ENCODE measurements at regions of chr9 and their contacts with region 1.

Region 1: DNA sequence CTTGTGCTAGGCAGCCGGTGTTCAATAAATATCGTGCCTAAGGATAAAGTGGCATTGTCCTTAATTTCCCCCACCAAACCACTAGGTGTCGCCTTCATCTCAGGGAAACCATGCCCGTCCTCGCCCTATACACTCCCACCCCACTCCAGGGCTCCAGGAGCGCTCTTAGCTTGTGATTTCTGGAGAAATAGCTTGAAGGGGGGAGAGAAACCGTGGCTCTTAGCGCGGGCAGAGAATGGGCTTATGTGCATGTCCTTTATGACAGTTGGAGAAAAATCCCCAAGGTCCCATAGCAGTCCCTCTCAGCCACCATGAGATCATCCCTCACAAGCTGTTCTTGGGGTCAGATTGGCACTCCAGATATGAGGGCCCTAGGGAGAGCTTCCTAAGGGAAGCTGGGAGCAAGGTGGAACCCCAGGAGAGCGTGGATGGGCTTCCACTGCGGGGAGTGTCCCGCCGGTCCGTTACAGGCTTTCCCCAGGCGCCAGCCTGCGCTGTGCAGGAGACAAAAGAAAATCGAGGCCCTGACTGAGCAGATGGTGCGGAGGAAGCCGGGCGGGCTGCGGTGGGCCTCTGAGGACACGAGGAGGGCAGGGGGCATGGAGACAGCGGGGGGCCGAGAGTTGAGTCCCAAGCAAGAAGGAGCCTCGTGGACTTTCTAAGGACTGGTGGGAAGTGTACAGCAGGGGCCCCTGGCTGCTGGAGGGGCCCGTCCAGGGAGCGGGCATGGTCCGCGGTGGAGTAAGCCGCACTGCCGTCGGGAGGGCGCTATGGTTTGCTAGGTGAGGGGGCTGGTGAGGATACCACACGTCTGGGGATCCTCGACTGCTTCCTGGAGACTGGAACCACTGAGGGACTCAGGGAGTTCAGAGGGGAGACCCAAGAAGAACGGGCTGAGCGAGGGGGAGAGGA is 750 bp upstream of the NPR2 start:
- DNase-seq: peak; percentile 92
- H3K4me3 ChIP-seq: no peak overlapping the region
- H3K27ac ChIP-seq: no peak overlapping the region
- H3K4me1 ChIP-seq: peaks cover 0 to 12% of the 10 kb centered on the region in 2 experiments; a peak in 1 of 4 replicates
- H3K27me3 ChIP-seq: no peaks in the 10 kb centered on the region
- CTCF ChIP-seq: peak; percentile 86
- EP300 ChIP-seq: no peak
- RAD21 ChIP-seq: peak; percentile 95

Region 2: DNA sequence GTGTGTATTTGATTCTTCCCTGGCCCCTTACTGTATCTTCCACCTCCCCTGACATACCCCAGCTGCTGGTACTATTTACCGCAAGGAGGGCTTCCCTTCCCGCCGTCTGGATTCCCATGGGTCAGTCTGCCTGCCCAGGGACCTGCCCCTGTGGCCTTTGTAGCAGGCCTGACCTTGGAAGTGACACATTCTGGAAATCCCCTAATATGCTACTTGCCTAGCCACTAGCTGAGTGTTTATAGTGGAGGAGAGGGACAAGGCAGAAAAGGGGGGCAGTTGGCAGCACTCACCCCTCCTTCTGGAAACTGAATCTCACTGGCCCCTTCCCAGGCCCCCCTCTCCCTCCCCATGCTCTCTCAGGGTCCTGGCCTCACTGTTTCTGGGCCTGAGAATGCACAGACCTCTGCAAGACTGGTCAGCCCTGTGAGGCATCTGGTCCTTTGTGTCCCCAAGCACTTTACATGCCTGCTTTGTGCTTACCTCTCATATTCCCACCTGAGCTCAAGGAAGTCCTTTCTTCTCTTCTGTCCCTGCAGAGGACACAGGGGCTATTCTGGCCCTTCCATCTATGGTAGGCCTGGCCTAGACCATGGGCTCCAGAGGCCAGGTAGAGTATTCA is 1072.5 kb before region 1 on chr9:
- CTCF ChIA-PET with region 1: no interaction called
- POLR2A ChIA-PET with region 1: no interaction called
- DNase-seq: no peak
- H3K4me3 ChIP-seq: no peak overlapping the region
- H3K27ac ChIP-seq: no peak overlapping the region
- H3K4me1 ChIP-seq: no peaks in the 10 kb centered on the region
- H3K27me3 ChIP-seq: no peaks in the 10 kb centered on the region; the same call in 1 of the 2 replicates
- CTCF ChIP-seq: no peak
- EP300 ChIP-seq: no peak
- RAD21 ChIP-seq: no peak

Region 3: GRCh38 chr9:35732122-35732799 is 58.4 kb before region 1 on chr9 and contains the starts of genes CREB3 and TLN1:
- CTCF ChIA-PET with region 1: interaction called, 10 read pairs
- POLR2A ChIA-PET with region 1: no interaction called
- DNase-seq: peak; percentile 97
- H3K4me3 ChIP-seq: peak within 1 kb of the TSS; percentile 89 to 96
- H3K27ac ChIP-seq: peak within 1 kb of the TSS; percentile 88 to 94
- H3K4me1 ChIP-seq: peaks cover 34 to 49% of the 10 kb centered on the region in 2 experiments
- H3K27me3 ChIP-seq: no peaks in the 10 kb centered on the region
- CTCF ChIP-seq: peak; percentile 22; the same call in 1 of the 2 replicates
- EP300 ChIP-seq: peak in 1 of 2 experiments; percentile 62; a peak in 1 of 4 replicates
- RAD21 ChIP-seq: no peak
- polyA plus RNA-seq, gene CREB3: 33.9 and 38.6 TPM in 2 replicates
- polyA plus RNA-seq, gene TLN1: 91.8 and 115 TPM in 2 replicates

Region 4: GRCh38 chr9:35769763-35770162 is 20.9 kb before region 1 on chr9:
- CTCF ChIA-PET with region 1: interaction called, 26 read pairs
- POLR2A ChIA-PET with region 1: no interaction called
- DNase-seq: no peak
- H3K4me3 ChIP-seq: no peak overlapping the region
- H3K27ac ChIP-seq: no peak overlapping the region
- H3K4me1 ChIP-seq: peaks cover 5 to 11% of the 10 kb centered on the region in 2 experiments; a peak in 3 of 4 replicates
- H3K27me3 ChIP-seq: no peaks in the 10 kb centered on the region
- CTCF ChIP-seq: no peak
- EP300 ChIP-seq: no peak
- RAD21 ChIP-seq: no peak

Region 5: DNA sequence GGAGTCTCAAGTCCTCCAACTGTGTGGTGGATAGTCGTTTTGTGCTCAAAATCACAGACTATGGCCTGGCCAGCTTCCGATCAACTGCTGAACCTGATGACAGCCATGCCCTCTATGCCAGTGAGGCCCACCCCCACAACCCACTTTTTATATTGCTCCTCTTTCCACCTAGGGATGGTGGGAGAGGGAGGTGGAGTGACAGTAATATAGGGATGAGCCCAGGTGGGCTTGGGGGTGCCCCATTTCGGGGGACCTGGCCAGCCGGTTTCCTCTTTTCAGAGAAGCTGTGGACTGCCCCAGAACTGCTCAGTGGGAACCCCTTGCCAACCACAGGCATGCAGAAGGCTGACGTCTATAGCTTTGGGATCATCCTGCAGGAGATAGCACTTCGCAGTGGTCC is 14.9 kb after region 1 on chr9:
- CTCF ChIA-PET with region 1: interaction called, 44 read pairs
- POLR2A ChIA-PET with region 1: no interaction called
- DNase-seq: no peak
- H3K4me3 ChIP-seq: no peak overlapping the region
- H3K27ac ChIP-seq: no peak overlapping the region
- H3K4me1 ChIP-seq: no peaks in the 10 kb centered on the region
- H3K27me3 ChIP-seq: no peaks in the 10 kb centered on the region
- CTCF ChIP-seq: no peak
- EP300 ChIP-seq: no peak
- RAD21 ChIP-seq: no peak

Region 6: DNA sequence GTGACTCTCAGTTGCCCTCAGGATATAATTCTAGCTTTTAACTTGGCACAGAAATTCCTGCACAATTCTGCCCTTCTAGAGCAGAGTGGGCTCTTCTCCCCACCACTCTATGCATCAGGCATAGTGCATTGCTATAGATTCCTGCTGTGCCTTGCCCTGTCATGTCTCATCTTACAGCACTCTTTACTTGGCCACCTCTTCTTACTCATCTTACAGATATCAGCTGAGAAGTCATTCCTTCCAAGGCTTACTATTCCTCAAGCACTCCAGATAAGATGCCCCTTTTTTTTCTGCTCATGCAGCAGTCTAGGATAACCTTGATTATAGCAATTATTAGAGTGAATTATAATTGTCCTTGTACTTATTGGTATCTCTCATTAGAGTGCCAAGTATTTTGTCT is 32.3 kb after region 1 on chr9:
- CTCF ChIA-PET with region 1: interaction called, 54 read pairs
- POLR2A ChIA-PET with region 1: no interaction called
- DNase-seq: no peak
- H3K4me3 ChIP-seq: no peak overlapping the region
- H3K27ac ChIP-seq: no peak overlapping the region
- H3K4me1 ChIP-seq: peaks cover 2 to 4% of the 10 kb centered on the region in 2 experiments; a peak in 1 of 4 replicates
- H3K27me3 ChIP-seq: no peaks in the 10 kb centered on the region
- CTCF ChIP-seq: no peak
- EP300 ChIP-seq: no peak
- RAD21 ChIP-seq: no peak

Region 7: DNA sequence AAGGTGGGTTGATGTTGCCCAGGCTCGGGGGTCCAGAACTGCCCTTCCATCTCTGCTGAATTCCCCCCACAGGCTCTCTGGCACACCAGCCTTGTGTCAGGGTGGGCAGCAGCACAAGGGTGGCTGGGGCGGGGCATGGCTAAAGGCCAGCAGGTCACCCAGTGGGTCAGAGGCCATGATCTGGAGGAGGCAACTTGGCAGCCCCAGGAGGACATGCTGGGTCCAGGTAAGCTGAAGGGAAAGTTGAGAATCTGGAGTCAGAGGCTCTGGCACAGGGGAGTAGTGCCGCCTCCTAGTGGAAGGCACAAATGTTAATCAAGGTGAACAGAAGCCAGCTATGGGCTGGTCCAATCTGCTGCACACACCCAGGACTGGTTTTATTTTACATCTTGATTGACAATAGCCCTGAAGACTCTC is 44.6 kb after region 1 on chr9:
- CTCF ChIA-PET with region 1: interaction called, 20 read pairs
- POLR2A ChIA-PET with region 1: no interaction called
- DNase-seq: no peak
- H3K4me3 ChIP-seq: no peak overlapping the region
- H3K27ac ChIP-seq: no peak overlapping the region
- H3K4me1 ChIP-seq: peaks cover 0 to 11% of the 10 kb centered on the region in 2 experiments; a peak in 1 of 4 replicates
- H3K27me3 ChIP-seq: no peaks in the 10 kb centered on the region
- CTCF ChIP-seq: peak; percentile 25; the same call in 1 of the 2 replicates
- EP300 ChIP-seq: no peak
- RAD21 ChIP-seq: no peak; the same call in 1 of the 2 replicates

Region 8: DNA sequence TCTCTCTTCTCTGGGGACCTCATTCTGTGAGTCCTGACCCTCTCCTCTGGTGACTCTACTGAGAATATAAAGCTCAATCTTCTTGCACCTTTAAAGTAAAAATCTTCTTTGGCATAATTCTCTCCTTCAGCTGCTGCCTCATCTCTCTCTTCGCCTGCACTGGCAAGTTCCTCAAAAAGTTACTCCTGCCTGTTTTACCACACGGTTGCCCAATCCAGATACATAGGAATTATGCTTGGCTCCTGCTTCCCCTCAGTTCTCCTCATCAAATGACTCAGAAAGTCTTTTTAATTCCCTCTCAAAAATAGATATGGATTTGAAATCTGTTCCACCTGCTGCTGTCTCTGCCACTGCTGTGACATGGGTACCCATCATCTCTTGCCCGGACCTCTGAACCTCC is 101.0 kb after region 1 on chr9:
- CTCF ChIA-PET with region 1: interaction called, 15 read pairs
- POLR2A ChIA-PET with region 1: no interaction called
- DNase-seq: no peak
- H3K4me3 ChIP-seq: no peak overlapping the region
- H3K27ac ChIP-seq: no peak overlapping the region
- H3K4me1 ChIP-seq: no peaks in the 10 kb centered on the region
- H3K27me3 ChIP-seq: 0 out of 2 replicates have a peak, but pooled peaks cover 8% of the 10 kb centered on the region
- CTCF ChIP-seq: no peak
- EP300 ChIP-seq: no peak
- RAD21 ChIP-seq: no peak

Measured in SK-N-SH (cell line).